Caco-2 (cell line): ENCODE measurements at regions of chr7 and their contacts with region 1.

Region 1: DNA sequence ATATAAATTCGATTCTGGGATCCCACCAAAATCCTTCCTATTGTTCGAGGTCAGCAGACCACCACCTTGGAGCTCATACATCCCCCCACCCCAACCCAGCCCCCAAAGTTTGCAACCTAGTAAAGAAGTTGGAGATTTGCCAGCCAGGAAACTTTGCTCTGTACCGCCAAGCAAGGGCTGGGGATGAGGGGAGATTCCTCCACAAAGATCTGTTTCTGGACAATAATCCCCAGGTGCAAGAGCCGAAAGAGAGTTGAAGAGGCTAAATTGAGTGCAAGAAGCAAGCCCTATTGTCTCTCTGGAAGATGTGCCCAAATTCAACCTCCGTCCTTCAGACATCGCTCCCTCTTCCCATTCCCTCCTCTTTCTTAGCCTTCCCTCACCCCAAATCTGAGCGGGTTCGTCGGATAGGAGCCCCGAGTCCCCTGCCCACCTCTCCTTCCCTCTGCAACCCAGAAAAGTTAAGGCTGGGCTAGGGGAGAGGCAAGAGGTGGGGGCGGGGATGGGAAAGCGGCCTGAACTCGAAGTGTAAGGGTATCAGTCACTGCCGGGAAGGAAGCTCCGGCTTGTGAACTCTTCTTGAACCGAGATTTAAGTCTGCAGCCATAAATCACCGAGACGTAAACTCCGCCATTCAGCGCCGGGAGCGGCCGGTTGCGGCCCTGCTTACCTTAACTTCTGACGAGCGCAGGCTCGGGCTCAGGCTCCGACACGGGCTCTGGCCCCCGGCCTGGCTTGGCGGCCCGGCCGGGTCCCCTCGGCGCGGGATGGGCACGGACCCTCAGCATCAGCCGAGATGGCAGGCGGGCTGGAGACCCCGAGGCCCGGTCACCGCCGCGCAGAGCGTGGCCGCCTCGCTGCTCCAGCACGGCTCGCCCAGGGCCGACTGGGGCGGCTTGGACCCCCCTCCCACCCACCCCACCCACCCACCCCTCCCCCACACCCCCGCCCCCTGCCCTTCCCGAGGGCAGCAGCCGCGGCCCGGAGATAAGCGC is 10.8 kb upstream of the HOXA2 start:
- DNase-seq: peak; percentile 65 to 83
- H3K4me3 ChIP-seq: peak overlapping the region; percentile 53
- H3K4me3 Mint-ChIP-seq: peak overlapping the region; percentile 76
- H3K27ac Mint-ChIP-seq: peak overlapping the region; percentile 77
- H3K4me1 ChIP-seq: peaks cover 49% of the 10 kb centered on the region
- H3K4me1 Mint-ChIP-seq: peaks cover 24% of the 10 kb centered on the region
- H3K27me3 ChIP-seq: no peaks in the 10 kb centered on the region
- H3K27me3 Mint-ChIP-seq: no peaks in the 10 kb centered on the region
- CTCF ChIP-seq: no peak

Region 2: DNA sequence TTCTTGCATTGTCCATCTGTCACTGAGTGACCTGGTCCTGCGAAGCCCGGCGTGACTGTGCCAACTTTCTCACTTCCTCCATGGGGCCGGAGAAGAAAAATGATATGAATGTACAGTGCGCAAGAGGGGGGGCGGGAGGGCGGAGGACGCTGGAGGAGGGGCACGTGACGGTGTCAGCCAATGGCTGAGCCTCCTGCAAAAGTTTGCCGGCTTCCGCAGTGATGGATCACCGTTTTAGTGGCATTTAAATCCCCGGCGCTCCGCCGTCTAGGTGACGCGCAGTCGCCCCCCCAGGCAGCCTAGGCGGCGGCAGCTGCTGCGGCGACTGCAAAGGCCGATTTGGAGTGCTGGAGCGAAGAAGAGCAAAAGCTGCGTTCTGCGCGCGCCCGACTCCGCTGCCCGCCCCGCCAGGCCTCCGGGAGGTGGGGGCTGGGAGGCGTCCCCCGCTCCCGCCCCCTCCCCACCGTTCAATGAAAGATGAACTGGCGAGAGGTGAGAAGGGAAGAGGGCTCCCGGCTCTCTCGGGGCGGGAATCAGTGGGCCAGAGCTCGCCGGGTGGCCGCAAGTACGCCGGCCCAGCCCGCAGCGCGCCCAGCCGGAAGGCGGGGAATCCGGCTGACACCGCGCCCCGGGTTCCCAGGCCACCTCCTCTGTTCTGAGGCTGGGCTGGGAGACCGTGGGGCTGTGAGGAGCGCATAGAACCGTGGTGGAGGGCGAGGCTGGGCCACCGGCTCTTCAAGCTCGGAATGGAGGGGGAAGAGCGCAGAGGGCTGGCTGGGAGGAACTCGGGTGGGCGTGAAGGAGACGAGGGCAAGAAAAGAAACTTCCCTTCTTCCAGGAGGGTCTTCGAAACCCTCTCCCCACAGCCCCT is 17.1 kb before region 1 on chr7 and contains the start of gene HOXA1:
- CTCF ChIA-PET with region 1: interaction called, 7 read pairs
- POLR2A ChIA-PET with region 1: interaction called, 16 read pairs
- intact Hi-C with region 1: loop called (anchors 1 kb)
- DNase-seq: peak; percentile 93 to 95
- H3K4me3 ChIP-seq: peak within 1 kb of the TSS; percentile 86
- H3K4me3 Mint-ChIP-seq: peak within 1 kb of the TSS; percentile 87
- H3K27ac Mint-ChIP-seq: peak within 1 kb of the TSS; percentile 74
- H3K4me1 ChIP-seq: peaks cover 10% of the 10 kb centered on the region
- H3K4me1 Mint-ChIP-seq: peaks cover 50% of the 10 kb centered on the region
- H3K27me3 ChIP-seq: no peaks in the 10 kb centered on the region
- H3K27me3 Mint-ChIP-seq: no peaks in the 10 kb centered on the region
- CTCF ChIP-seq: peak in 1 of 2 experiments; percentile 17
- total RNA-seq, gene HOXA1: 18.5 and 18.8 TPM in 2 replicates

Region 3: GRCh38 chr7:27124096-27124901 is 11.0 kb after region 1 on chr7:
- CTCF ChIA-PET with region 1: interaction called, 3 read pairs
- POLR2A ChIA-PET with region 1: interaction called, 6 read pairs
- intact Hi-C with region 1: loop called (anchors 1 kb)
- DNase-seq: no peak
- H3K4me3 ChIP-seq: no peak overlapping the region
- H3K4me3 Mint-ChIP-seq: peak overlapping the region; percentile 92
- H3K27ac Mint-ChIP-seq: peak overlapping the region; percentile 95
- H3K4me1 ChIP-seq: peaks cover 47% of the 10 kb centered on the region
- H3K4me1 Mint-ChIP-seq: peaks cover 38% of the 10 kb centered on the region
- H3K27me3 ChIP-seq: no peaks in the 10 kb centered on the region
- H3K27me3 Mint-ChIP-seq: no peaks in the 10 kb centered on the region
- CTCF ChIP-seq: no peak

Region 4: DNA sequence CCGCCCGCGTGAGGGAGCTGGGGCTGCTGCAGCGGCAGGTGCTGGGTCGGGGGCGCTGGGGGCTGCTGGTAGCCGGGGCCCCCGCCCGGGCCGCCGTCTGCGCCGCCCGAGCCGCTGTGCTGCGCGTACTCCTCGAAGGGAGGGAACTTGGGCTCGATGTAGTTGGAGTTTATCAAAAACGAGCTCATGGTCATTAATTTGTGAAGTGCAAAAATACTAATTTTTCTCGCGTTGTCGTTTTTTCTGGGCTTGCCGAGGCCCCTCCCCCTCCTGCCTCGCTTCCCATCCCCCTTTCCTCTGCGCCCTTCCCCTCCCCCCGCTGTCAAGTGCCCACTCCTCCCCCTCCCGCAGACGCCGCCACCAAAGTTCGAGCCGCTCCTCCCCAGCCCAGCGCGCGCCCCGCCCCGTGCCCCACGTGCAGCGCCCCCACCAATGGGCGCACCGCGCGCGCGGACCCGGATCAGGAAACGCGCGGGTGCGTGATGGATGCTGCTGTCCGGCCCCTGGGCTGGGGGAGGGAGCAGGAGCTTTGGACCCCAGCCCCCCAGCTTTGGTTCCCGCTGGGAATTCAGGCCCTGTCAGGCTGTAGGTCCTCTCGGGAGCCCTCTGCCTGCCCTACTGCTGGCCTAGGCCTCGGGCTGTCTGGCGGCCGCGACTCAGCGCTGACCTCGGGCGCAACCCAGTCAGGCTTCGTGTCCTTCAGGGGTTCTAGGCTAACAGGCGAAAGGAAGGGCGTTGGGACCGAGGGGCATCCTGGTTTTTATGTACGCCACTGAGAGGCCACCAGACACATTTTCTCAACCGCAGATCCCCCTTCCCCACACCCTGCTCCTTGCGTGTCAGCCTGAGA is 17.5 kb after region 1 on chr7 and contains the start of gene HOXA4:
- CTCF ChIA-PET with region 1: interaction called, 9 read pairs
- POLR2A ChIA-PET with region 1: interaction called, 19 read pairs
- intact Hi-C with region 1: loop called (anchors 2 kb)
- DNase-seq: peak; percentile 94 to 97
- H3K4me3 ChIP-seq: peak within 1 kb of the TSS; percentile 53
- H3K4me3 Mint-ChIP-seq: peak within 1 kb of the TSS; percentile 76
- H3K27ac Mint-ChIP-seq: peak within 1 kb of the TSS; percentile 57
- H3K4me1 ChIP-seq: peaks cover 28% of the 10 kb centered on the region
- H3K4me1 Mint-ChIP-seq: peaks cover 33% of the 10 kb centered on the region
- H3K27me3 ChIP-seq: no peaks in the 10 kb centered on the region
- H3K27me3 Mint-ChIP-seq: no peaks in the 10 kb centered on the region
- CTCF ChIP-seq: no peak
- total RNA-seq, gene HOXA4: 4.8 and 5.5 TPM in 2 replicates